K562 (cell line): ENCODE measurements at regions of chr17 and their contacts with region 1.

Region 1: DNA sequence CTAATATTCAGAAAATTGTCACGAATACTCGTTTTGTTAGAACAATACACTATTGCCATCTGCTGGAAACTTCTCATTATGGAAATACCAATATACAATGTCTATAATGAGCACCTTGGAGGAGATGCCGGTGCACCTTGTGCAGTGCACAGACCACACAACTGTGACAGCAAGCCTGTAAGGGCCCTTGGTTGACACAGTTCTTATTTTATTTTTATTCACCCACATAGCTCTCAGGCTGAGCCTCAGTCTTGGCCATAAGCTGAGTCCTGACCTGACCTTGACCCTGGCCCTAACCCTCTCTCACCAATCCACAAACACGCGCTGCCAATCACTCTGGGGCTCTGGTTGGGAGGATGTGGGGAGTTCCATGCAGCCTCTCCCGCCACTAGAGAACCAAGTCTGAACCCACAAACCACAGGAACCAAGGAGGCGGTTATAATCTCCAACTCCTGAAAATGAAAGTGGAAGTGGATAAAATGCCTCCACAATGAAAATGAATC is 7.6 kb downstream of the AIPL1 start:
- DNase-seq: no peak
- ATAC-seq: no peak
- H3K4me3 ChIP-seq: no peak overlapping the region
- H3K27ac ChIP-seq: no peak overlapping the region
- H3K4me1 ChIP-seq: no peaks in the 10 kb centered on the region
- H3K27me3 ChIP-seq: peaks cover 0 to 30% of the 10 kb centered on the region in 2 experiments; a peak in 2 of 5 replicates
- CTCF ChIP-seq: peak in 1 of 3 experiments; percentile 27; a peak in 2 of 6 replicates
- EP300 ChIP-seq: no peak
- POLR2A ChIP-seq: no peak
- RAD21 ChIP-seq: no peak; a peak in 1 of 4 replicates

Region 2: GRCh38 chr17:5584383-5585286 is 842.7 kb before region 1 on chr17 and contains the start of gene NLRP1:
- CTCF ChIA-PET with region 1: interaction called, 5 read pairs
- POLR2A ChIA-PET with region 1: no interaction called
- in situ Hi-C with region 1: loop called (anchors 5 kb)
- intact Hi-C with region 1: no loop called
- DNase-seq: peak in 2 of 4 experiments; percentile 10 to 16
- ATAC-seq: no peak
- H3K4me3 ChIP-seq: no peak within 1 kb of the TSS
- H3K27ac ChIP-seq: no peak within 1 kb of the TSS
- H3K4me1 ChIP-seq: no peaks in the 10 kb centered on the region
- H3K27me3 ChIP-seq: no peaks in the 10 kb centered on the region
- CTCF ChIP-seq: no peak
- EP300 ChIP-seq: no peak
- POLR2A ChIP-seq: no peak
- RAD21 ChIP-seq: no peak
- polyA plus RNA-seq, gene NLRP1: 4.0 to 4.1 TPM